ENCODE measurements at regions of chr3 and their contacts with region 1.

Region 1: DNA sequence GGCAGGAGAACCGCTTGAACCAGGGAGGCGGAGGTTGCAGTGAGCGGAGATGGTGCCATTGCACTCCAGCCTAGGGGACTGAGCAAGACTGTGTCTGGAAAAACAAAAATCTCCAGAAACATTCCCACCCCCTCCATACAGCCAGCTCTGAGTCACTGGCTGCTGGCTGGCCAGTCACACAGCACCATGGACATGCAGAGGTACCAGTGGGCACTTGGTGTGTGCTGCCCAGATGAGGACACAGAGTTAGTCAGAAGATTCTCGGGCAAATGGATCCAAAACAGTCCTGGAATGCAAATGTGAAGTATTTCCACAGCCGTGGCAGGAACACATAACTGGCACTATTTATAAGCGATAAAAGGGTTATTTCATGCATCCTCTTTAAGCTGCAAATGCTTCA is 44.6 kb downstream of the BDH1 start:
- DNase-seq: no peak
- H3K4me3 ChIP-seq: no peak overlapping the region
- H3K27ac ChIP-seq: no peak overlapping the region
- H3K4me1 ChIP-seq: peaks cover 0 to 9% (median 3%) of the 10 kb centered on the region in 4 donors
- H3K27me3 ChIP-seq: no peaks in the 10 kb centered on the region
- CTCF ChIP-seq: no peak

Region 2: GRCh38 chr3:197256836-197257444 is 254.2 kb before region 1 on chr3:
- intact Hi-C with region 1: loop called (anchors 2 kb)
- DNase-seq: no peak
- H3K4me3 ChIP-seq: no peak overlapping the region
- H3K27ac ChIP-seq: no peak overlapping the region
- H3K4me1 ChIP-seq: peaks cover 0 to 4% (median 0%) of the 10 kb centered on the region in 4 donors
- H3K27me3 ChIP-seq: no peaks in the 10 kb centered on the region
- CTCF ChIP-seq: peak; percentile 65 to 77

Region 3: GRCh38 chr3:197394464-197395321 is 116.4 kb before region 1 on chr3:
- intact Hi-C with region 1: no loop called
- DNase-seq: peak; percentile 37 to 51
- H3K4me3 ChIP-seq: no peak overlapping the region
- H3K27ac ChIP-seq: no peak overlapping the region
- H3K4me1 ChIP-seq: peaks cover 0 to 13% (median 5%) of the 10 kb centered on the region in 4 donors
- H3K27me3 ChIP-seq: no peaks in the 10 kb centered on the region
- CTCF ChIP-seq: no peak

Region 4: DNA sequence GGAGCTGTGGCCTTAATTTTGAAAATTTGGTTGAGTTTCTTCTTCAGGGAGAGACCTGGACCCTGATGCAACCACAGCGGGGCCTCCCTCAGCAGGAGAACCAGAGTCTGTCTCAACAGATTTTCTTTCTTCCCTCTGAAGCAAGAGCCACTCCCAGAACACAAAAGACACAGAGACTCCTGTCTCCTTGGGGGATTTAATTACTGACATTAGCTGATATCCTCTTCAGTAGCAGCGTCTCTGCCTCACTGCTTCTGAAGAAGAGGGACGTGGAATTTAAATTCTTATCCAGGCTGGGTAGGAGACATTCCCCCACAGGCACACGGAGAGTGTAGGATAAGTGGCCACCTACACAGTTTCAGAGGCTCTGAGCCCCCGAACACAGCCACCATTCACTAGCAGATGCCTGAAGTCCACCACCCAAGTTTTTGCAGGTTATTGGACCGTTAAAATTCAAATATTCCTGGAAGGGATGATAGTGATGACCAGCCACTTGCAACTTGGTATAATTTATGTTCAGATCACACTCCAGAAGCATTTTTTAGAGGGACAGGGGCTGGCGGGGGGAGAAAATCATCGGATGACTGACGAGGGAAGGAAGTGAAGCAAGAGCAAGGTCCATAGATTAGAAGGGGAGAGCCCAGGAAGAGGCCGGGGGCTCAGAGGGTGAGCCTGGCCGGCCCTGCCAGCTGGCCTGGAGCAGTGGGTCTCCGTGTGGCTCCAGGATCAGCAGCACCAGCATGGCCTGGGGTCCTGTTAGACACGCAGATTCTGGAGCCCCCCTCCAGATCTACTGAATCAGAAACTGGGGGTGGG is 65.0 kb before region 1 on chr3:
- intact Hi-C with region 1: no loop called
- DNase-seq: no peak
- H3K4me3 ChIP-seq: no peak overlapping the region
- H3K27ac ChIP-seq: no peak overlapping the region
- H3K4me1 ChIP-seq: no peaks in the 10 kb centered on the region
- H3K27me3 ChIP-seq: peaks cover 0 to 8% of the 10 kb centered on the region in 2 donors
- CTCF ChIP-seq: no peak